Activated T-helper 1 cell treated with anti-CD3 and anti-CD28 coated beads, Interleukin-12 subunit alpha, Interleukin-12 subunit beta, Interleukin-2, Interleukin-4 antibody, amounts not matched to agents 30 ng/mL and 10 ng/mL and 1 ng/mL, durations not matched to agents 14 hours and 24 hours and 36 hours (primary cell): ENCODE measurements at regions of chr17 and their contacts with region 1.

Region 1: GRCh38 chr17:42609182-42609813 is at the starts of genes RETREG3 and TUBG1:
- DNase-seq: peak; percentile 100
- H3K4me3 Mint-ChIP-seq: peak within 1 kb of the TSS; percentile 100
- H3K27ac Mint-ChIP-seq: peak within 1 kb of the TSS; percentile 94
- H3K4me1 Mint-ChIP-seq: peaks cover 39% of the 10 kb centered on the region
- H3K27me3 Mint-ChIP-seq: no peaks in the 10 kb centered on the region
- total RNA-seq, gene RETREG3: 41.1 and 43.4 TPM in 2 replicates
- total RNA-seq, gene TUBG1: 90.0 and 95.2 TPM in 2 replicates

Region 2: GRCh38 chr17:42438600-42439567 is 170.4 kb before region 1 on chr17:
- intact Hi-C with region 1: no loop called
- DNase-seq: peak; percentile 28
- H3K4me3 Mint-ChIP-seq: no peak overlapping the region
- H3K27ac Mint-ChIP-seq: no peak overlapping the region
- H3K4me1 Mint-ChIP-seq: peaks cover 11% of the 10 kb centered on the region
- H3K27me3 Mint-ChIP-seq: peaks cover 6% of the 10 kb centered on the region

Region 3: GRCh38 chr17:42536048-42536371 is 73.3 kb before region 1 on chr17 and contains the start of gene NAGLU:
- intact Hi-C with region 1: loop called (anchors 1 kb)
- DNase-seq: peak; percentile 85
- H3K4me3 Mint-ChIP-seq: peak within 1 kb of the TSS; percentile 90
- H3K27ac Mint-ChIP-seq: peak within 1 kb of the TSS; percentile 89
- H3K4me1 Mint-ChIP-seq: peaks cover 33% of the 10 kb centered on the region
- H3K27me3 Mint-ChIP-seq: peaks cover 16% of the 10 kb centered on the region
- total RNA-seq, gene NAGLU: 18.2 and 20.8 TPM in 2 replicates

Region 4: GRCh38 chr17:42577532-42578281 is 31.6 kb before region 1 on chr17 and contains the start of gene PSMC3IP:
- intact Hi-C with region 1: loop called (anchors 1 kb)
- DNase-seq: peak; percentile 92
- H3K4me3 Mint-ChIP-seq: peak within 1 kb of the TSS; percentile 98
- H3K27ac Mint-ChIP-seq: peak within 1 kb of the TSS; percentile 96
- H3K4me1 Mint-ChIP-seq: peaks cover 47% of the 10 kb centered on the region
- H3K27me3 Mint-ChIP-seq: no peaks in the 10 kb centered on the region
- total RNA-seq, gene PSMC3IP: 27.6 and 31.5 TPM in 2 replicates

Region 5: DNA sequence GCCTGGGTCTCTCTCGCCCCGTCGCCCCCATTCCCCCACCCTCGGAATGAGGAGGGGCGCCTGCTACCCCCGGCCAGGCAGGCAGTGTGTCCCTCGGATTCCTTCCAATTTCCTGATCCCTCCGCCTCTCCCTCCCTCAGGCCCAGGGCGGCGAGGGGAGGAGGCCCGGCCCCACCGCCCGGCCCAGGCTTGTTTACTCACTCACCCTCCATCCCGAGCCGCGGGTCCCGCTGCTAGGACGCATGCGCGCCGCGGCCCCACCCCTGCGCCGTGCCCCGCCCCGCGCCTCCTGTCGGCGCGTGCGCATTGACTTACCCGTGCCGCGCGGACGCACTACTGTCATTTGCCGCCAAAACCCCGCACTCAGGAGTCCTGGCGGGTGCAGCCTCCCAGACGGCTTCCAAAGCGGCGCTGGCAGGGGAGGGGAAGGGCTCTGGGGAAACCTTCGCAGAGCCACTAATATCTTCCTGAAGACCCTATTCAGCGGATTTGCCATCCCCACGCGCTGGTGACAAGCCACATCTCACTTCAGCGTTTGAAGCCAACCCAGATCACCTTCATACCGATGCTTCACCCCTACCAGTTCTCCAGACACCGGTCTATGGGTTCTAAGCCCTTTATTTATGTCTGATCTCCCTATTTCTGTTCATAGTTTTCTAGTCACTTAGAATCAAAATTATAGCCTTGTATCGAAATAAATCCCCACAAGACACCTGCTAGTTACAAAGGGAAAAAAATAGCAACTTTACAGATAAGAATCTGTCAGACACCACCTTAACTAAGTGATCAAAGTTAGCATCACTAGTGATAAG is 135.7 kb after region 1 on chr17 and contains the start of gene EZH1:
- intact Hi-C with region 1: loop called (anchors 1 kb)
- DNase-seq: peak; percentile 93
- H3K4me3 Mint-ChIP-seq: peak within 1 kb of the TSS; percentile 91
- H3K27ac Mint-ChIP-seq: peak within 1 kb of the TSS; percentile 83
- H3K4me1 Mint-ChIP-seq: peaks cover 15% of the 10 kb centered on the region
- H3K27me3 Mint-ChIP-seq: peaks cover 25% of the 10 kb centered on the region
- total RNA-seq, gene EZH1: 35.6 and 40.0 TPM in 2 replicates